PC-3 (cell line): ENCODE measurements at regions of chr10 and their contacts with region 1.

Region 1: GRCh38 chr10:22534849-22535604 is 179.4 kb downstream of the PIP4K2A start:
- DNase-seq: peak; percentile 58
- ATAC-seq: peak; percentile 79
- H3K4me3 ChIP-seq: no peak overlapping the region
- H3K27ac ChIP-seq: no peak overlapping the region
- H3K4me1 ChIP-seq: peaks cover 10% of the 10 kb centered on the region
- H3K27me3 ChIP-seq: no peaks in the 10 kb centered on the region
- CTCF ChIP-seq: no peak

Region 2: DNA sequence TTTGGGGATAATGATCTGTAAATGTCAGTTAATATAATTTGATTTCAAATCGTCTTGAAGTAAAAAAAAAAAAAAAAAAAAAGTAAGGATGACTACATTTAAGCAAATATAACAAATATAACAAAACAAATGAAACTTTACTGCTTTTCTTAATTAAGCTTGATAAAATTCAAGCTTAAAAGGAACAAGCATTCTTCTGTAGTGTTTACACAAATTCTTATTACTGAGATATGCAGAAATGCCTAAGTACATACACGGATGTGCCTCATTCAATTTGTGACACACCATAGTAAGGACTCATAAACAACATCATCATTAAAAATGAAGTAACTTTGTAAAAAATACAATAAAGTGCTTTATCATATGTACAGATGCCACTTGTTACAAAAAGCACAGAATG is 47.8 kb after region 1 on chr10:
- CTCF ChIA-PET with region 1: no interaction called
- POLR2A ChIA-PET with region 1: interaction called, 15 read pairs
- intact Hi-C with region 1: no loop called
- DNase-seq: no peak
- ATAC-seq: peak; percentile 56
- H3K4me3 ChIP-seq: no peak overlapping the region
- H3K27ac ChIP-seq: no peak overlapping the region
- H3K4me1 ChIP-seq: no peaks in the 10 kb centered on the region; the same call in 1 of the 2 replicates
- H3K27me3 ChIP-seq: no peaks in the 10 kb centered on the region
- CTCF ChIP-seq: no peak

Region 3: DNA sequence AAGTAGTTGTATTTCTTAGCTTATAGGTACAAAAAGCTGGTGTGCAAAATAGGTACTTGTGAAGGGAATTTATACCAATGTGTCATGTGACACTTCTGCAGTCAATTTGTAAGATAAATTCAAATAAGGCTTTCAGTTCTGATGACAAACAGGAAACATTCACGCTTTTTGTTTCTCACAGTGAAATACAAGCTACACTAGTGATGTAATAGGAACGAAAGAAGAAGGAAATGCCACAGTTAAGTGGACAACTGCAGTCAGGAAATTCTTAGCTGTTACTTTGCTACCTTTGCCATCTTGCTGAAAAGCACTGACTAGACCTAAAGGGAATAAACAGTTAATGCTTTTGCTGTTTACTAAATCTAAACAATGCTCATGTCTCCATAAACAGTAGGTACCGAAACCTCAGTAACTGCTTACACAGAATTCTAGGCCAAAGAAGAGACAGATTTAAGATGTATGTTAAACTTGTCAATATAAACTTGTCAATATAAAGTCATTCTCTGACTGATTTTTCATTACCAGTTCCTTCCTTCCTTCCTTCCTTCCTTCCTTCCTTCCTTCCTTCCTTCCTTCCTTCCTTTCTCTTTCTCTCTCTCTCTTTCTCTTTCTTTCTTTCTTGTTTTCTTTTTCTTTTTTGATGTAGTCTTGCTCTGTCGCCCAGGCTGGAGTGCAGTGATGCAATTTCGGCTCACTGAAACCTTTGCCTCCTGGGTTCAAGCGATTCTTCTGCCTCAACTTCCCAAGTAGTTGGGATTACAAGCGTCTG is 914.0 kb after region 1 on chr10:
- CTCF ChIA-PET with region 1: no interaction called
- POLR2A ChIA-PET with region 1: no interaction called
- intact Hi-C with region 1: no loop called
- DNase-seq: no peak
- ATAC-seq: no peak
- H3K4me3 ChIP-seq: no peak overlapping the region
- H3K27ac ChIP-seq: no peak overlapping the region
- H3K4me1 ChIP-seq: peaks cover 5% of the 10 kb centered on the region; the same call in 1 of the 2 replicates
- H3K27me3 ChIP-seq: no peaks in the 10 kb centered on the region
- CTCF ChIP-seq: no peak